Spleen (tissue), 13 donors: ENCODE measurements at regions of chr21 and their contacts with region 1.

Region 1: DNA sequence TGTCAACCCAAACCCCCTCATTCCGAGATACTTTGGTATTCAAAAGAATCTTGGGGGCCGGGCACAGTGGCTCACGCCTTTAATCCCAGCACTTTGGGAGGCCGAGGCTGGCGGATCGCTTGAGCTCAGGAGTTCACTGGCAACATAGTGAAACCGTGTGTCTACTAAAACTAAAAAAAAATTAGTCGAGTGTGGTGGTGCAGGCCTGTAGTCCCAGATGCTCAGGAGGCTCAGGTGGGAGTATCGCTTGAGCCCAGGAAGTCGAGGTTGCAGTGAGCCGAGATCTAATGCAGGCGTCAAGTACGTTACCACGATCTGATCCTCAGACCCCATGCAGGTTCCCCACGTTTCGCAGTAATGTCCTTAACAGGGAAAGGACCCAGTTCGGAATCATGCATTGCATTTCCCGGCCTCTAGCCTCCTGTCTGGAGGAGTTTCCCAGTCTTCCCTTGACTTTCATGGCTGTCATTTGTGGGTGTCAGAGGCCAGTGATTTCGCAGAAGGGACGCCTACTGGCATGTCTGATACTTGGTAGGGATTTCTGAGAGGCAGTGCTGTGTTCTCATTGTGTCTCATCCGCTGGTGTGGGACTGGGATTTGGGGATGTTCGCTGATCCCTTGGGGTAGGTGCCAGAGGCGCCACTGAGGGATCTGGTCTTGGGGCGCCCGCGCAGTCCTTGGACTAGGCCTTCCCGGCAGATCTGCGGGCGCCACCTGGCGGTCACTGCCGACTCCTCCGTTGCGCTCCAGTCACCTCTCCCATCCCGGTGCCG is 39.3 kb upstream of the HMGN1 start:
- DNase-seq: peak; percentile 99
- H3K4me3 ChIP-seq: peak overlapping the region; percentile 24 to 72 (median 45)
- H3K27ac ChIP-seq: peak overlapping the region in 7 of 8 donors; percentile 16 to 85 (median 67)
- H3K4me1 ChIP-seq: peaks cover 14 to 55% (median 32%) of the 10 kb centered on the region in 6 donors
- H3K27me3 ChIP-seq: no peaks in the 10 kb centered on the region
- CTCF ChIP-seq: peak; percentile 82 to 98 (median 94)
- POLR2A ChIP-seq: no peak

Region 2: DNA sequence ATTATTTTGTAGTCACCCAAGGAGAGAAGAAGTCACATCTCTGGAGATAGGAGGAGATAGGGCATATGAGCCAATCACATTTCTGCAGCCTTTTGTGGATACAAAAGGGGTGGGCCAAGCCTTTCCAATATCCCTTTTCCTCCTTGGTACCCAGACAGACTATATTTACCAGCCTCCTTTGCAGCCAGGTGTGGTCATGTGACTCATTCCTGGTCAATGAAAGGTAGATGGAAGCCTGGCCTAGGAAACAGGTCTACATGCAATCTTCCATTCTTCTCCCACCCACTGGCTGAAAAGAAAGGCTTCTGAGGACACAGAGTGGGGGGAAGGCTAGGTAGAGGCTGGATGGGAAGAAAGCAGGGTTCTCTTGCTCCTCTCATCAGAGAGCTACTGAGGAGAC is 831.8 kb before region 1 on chr21:
- intact Hi-C with region 1: no loop called
- DNase-seq: no peak
- H3K4me3 ChIP-seq: no peak overlapping the region
- H3K27ac ChIP-seq: no peak overlapping the region
- H3K4me1 ChIP-seq: no peaks in the 10 kb centered on the region
- H3K27me3 ChIP-seq: no peaks in the 10 kb centered on the region
- CTCF ChIP-seq: no peak
- POLR2A ChIP-seq: no peak

Region 3: GRCh38 chr21:39313571-39314142 is 74.6 kb before region 1 on chr21 and contains the start of gene BRWD1:
- intact Hi-C with region 1: loop called (anchors 10 kb)
- DNase-seq: peak; percentile 95
- H3K4me3 ChIP-seq: peak within 1 kb of the TSS; percentile 83 to 97 (median 90)
- H3K27ac ChIP-seq: peak within 1 kb of the TSS; percentile 73 to 98 (median 96)
- H3K4me1 ChIP-seq: peaks cover 16 to 71% (median 33%) of the 10 kb centered on the region in 6 donors
- H3K27me3 ChIP-seq: no peaks in the 10 kb centered on the region
- CTCF ChIP-seq: peak in 10 of 11 experiments; percentile 15 to 75 (median 43)
- POLR2A ChIP-seq: peak in 2 of 3 donors; percentile 39 to 47
- total RNA-seq, gene BRWD1: 46.5 to 98.0 (median 60.5) TPM

Region 4: GRCh38 chr21:39349211-39350093 is 38.8 kb before region 1 on chr21:
- intact Hi-C with region 1: loop called (anchors 5 kb)
- DNase-seq: peak; percentile 99
- H3K4me3 ChIP-seq: peak overlapping the region; percentile 67 to 92 (median 78)
- H3K27ac ChIP-seq: peak overlapping the region; percentile 85 to 99 (median 94)
- H3K4me1 ChIP-seq: peaks cover 14 to 48% (median 39%) of the 10 kb centered on the region in 6 donors
- H3K27me3 ChIP-seq: no peaks in the 10 kb centered on the region
- CTCF ChIP-seq: peak in 1 of 11 experiments; percentile 7
- POLR2A ChIP-seq: peak in 2 of 3 donors; percentile 2 to 25

Region 5: GRCh38 chr21:39445321-39446269 is 57.4 kb after region 1 on chr21 and contains the start of gene LCA5L:
- intact Hi-C with region 1: no loop called
- DNase-seq: peak; percentile 97
- H3K4me3 ChIP-seq: peak within 1 kb of the TSS; percentile 74 to 94 (median 90)
- H3K27ac ChIP-seq: peak within 1 kb of the TSS; percentile 80 to 92 (median 90)
- H3K4me1 ChIP-seq: peaks cover 7 to 25% (median 22%) of the 10 kb centered on the region in 6 donors
- H3K27me3 ChIP-seq: peaks cover 0 to 4% (median 0%) of the 10 kb centered on the region in 7 donors
- CTCF ChIP-seq: peak in 1 of 11 experiments; percentile 29
- POLR2A ChIP-seq: no peak
- total RNA-seq, gene LCA5L: 0.40 to 1.3 (median 0.71) TPM in 6 of 7 donors, not detected in the other